B cell (primary cell): ENCODE measurements at regions of chr12 and their contacts with region 1.

Region 1: DNA sequence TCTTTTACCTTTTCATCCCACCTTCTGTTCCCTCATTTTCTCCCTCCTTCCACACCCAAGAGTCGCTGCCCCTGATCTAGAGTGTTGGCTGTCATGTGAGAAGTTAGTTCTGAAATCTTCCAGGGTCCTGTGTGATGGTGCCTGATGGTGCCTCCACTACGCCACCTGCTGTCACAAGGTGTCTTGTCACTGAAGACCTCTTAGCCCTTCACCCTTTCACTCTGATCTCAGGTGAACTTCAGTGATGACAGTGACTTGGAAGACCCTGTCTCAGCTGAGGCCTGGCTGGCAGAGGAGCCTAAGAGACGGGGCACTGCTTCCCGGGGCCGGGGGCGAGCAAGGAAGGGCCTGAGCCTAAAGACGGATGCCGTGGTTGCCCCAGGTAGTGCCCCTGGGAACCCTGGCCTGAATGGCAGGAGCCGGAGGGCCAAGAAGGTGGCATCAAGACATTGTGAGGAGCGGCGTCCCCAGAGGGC is 7.6 kb upstream of the PFDN5 start:
- DNase-seq: peak; percentile 85
- ATAC-seq: peak; percentile 96
- H3K4me3 ChIP-seq: no peak overlapping the region
- H3K4me3 Mint-ChIP-seq: no peak overlapping the region
- H3K27ac ChIP-seq: no peak overlapping the region
- H3K27ac Mint-ChIP-seq: peak overlapping the region; percentile 28
- H3K4me1 ChIP-seq: no peaks in the 10 kb centered on the region
- H3K4me1 Mint-ChIP-seq: peaks cover 5% of the 10 kb centered on the region
- H3K27me3 ChIP-seq: no peaks in the 10 kb centered on the region
- H3K27me3 Mint-ChIP-seq: no peaks in the 10 kb centered on the region
- CTCF ChIP-seq: peak; percentile 82

Region 2: GRCh38 chr12:52920937-52921826 is 366.6 kb before region 1 on chr12:
- CTCF ChIA-PET with region 1: no interaction called
- POLR2A ChIA-PET with region 1: no interaction called
- intact Hi-C with region 1: no loop called
- DNase-seq: no peak
- ATAC-seq: no peak
- H3K4me3 ChIP-seq: no peak overlapping the region
- H3K4me3 Mint-ChIP-seq: no peak overlapping the region
- H3K27ac ChIP-seq: no peak overlapping the region
- H3K27ac Mint-ChIP-seq: no peak overlapping the region
- H3K4me1 ChIP-seq: no peaks in the 10 kb centered on the region
- H3K4me1 Mint-ChIP-seq: no peaks in the 10 kb centered on the region
- H3K27me3 ChIP-seq: peaks cover 0 to 2% (median 0%) of the 10 kb centered on the region in 4 experiments
- H3K27me3 Mint-ChIP-seq: peaks cover 9% of the 10 kb centered on the region
- CTCF ChIP-seq: no peak

Region 3: GRCh38 chr12:53174881-53175491 is 112.8 kb before region 1 on chr12:
- CTCF ChIA-PET with region 1: interaction called, 11 read pairs
- POLR2A ChIA-PET with region 1: no interaction called
- intact Hi-C with region 1: no loop called
- DNase-seq: no peak
- ATAC-seq: no peak
- H3K4me3 ChIP-seq: no peak overlapping the region
- H3K4me3 Mint-ChIP-seq: no peak overlapping the region
- H3K27ac ChIP-seq: no peak overlapping the region
- H3K27ac Mint-ChIP-seq: no peak overlapping the region
- H3K4me1 ChIP-seq: peaks cover 6% of the 10 kb centered on the region in 2 donors
- H3K4me1 Mint-ChIP-seq: peaks cover 9% of the 10 kb centered on the region
- H3K27me3 ChIP-seq: no peaks in the 10 kb centered on the region
- H3K27me3 Mint-ChIP-seq: no peaks in the 10 kb centered on the region
- CTCF ChIP-seq: no peak